ENCODE measurements at regions of chr16 and their contacts with region 1.

Region 1: DNA sequence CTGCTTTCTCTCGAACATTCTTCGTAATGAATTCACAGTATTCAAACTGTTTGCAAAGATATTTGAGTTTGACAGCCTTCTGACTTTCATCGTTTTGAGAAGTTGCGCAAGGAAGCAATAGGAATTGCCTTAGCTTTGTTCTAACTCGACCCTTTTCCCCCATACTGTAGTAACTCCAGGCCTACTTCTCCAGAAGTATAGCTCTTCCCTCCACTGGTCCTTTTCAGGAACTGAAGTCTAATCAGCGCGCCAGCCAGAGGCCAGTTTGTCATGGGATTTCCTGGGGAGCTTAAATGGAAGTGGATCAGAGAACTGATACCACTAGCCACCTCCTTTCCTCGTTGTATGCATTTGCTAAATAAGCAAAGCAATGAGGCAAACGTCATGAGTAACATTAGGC is 27.9 kb downstream of the CDR2 start:
- DNase-seq: no peak
- H3K4me3 ChIP-seq: no peak overlapping the region
- H3K27ac ChIP-seq: peak overlapping the region; percentile 96
- H3K4me1 ChIP-seq: peaks cover 38% of the 10 kb centered on the region
- H3K27me3 ChIP-seq: no peaks in the 10 kb centered on the region
- CTCF ChIP-seq: no peak

Region 2: DNA sequence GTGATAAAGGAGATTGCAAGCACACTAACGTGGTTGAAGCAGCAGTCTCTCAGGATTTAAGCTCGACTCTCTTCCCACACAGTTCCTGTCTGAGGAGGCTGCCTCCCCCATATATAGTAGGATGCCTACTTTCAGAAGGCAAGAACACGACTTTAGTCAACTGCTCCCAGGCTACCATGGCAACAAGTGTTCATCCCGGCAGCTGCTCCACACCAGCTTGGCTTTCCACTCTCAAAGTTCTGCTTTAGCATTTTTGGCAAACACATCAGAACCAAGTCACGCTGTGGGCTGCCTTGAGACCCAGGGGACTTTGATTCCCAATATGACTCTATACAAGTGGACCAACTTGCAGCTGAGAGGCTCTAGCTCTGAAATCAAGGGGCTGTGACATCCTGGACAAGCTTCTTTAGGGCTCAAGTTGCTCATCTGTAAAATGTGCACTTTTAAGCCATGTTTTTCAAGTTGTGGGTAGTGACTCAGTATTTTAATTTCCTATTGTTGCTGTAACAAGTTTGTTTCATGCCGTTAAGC is 1151.6 kb before region 1 on chr16:
- CTCF ChIA-PET with region 1: no interaction called
- dilution Hi-C with region 1: no loop called
- in situ Hi-C with region 1: loop called in 1 of 2 experiments (anchors 25 kb)
- intact Hi-C with region 1: no loop called
- DNase-seq: peak; percentile 39
- H3K4me3 ChIP-seq: no peak overlapping the region
- H3K27ac ChIP-seq: no peak overlapping the region
- H3K4me1 ChIP-seq: no peaks in the 10 kb centered on the region
- H3K27me3 ChIP-seq: no peaks in the 10 kb centered on the region
- CTCF ChIP-seq: no peak

Region 3: GRCh38 chr16:22314661-22315378 is 31.7 kb before region 1 on chr16:
- CTCF ChIA-PET with region 1: no interaction called
- dilution Hi-C with region 1: no loop called
- in situ Hi-C with region 1: no loop called
- intact Hi-C with region 1: loop called (anchors 5 kb)
- DNase-seq: peak; percentile 88
- H3K4me3 ChIP-seq: peak overlapping the region in 2 of 3 experiments; percentile 5 to 30
- H3K27ac ChIP-seq: peak overlapping the region; percentile 42
- H3K4me1 ChIP-seq: peaks cover 22% of the 10 kb centered on the region
- H3K27me3 ChIP-seq: no peaks in the 10 kb centered on the region
- CTCF ChIP-seq: no peak

Measured in mammary epithelial cell (primary cell).